ENCODE measurements at regions of chr12 and their contacts with region 1.

Region 1: DNA sequence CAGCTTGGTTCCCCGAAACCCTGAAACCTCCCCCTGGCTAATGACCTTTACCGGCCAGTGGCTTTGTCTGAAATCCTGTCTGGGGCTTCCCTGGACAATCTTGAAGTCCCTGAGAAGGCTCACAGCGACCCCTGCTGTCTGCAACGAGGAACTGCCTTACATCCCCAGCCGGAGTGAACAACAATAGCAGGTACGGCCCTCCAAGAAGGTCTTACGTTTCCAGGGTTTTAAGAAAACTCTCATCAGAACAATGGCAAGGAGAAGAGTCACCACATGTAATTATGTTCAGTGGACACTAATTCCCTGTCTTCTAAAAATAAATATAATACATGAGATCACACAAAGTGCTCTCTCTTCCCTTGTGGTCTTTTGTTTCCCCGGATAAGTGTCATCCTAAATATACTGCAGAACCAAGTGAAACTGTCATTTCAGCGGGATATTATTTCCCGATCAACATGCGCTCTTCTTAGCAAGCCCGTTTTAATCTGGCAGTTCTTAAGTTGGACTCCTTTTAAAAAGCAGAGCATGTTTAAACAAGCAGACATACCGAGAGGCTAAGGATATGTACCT is 53.3 kb downstream of the RBM19 start:
- DNase-seq: peak; percentile 11 to 47 (median 14)
- H3K4me3 ChIP-seq: no peak overlapping the region
- H3K4me3 Mint-ChIP-seq: no peak overlapping the region
- H3K27ac ChIP-seq: no peak overlapping the region
- H3K27ac Mint-ChIP-seq: no peak overlapping the region
- H3K4me1 ChIP-seq: no peaks in the 10 kb centered on the region
- H3K4me1 Mint-ChIP-seq: no peaks in the 10 kb centered on the region
- H3K27me3 ChIP-seq: no peaks in the 10 kb centered on the region
- H3K27me3 Mint-ChIP-seq: no peaks in the 10 kb centered on the region
- CTCF ChIP-seq: peak; percentile 85

Region 2: DNA sequence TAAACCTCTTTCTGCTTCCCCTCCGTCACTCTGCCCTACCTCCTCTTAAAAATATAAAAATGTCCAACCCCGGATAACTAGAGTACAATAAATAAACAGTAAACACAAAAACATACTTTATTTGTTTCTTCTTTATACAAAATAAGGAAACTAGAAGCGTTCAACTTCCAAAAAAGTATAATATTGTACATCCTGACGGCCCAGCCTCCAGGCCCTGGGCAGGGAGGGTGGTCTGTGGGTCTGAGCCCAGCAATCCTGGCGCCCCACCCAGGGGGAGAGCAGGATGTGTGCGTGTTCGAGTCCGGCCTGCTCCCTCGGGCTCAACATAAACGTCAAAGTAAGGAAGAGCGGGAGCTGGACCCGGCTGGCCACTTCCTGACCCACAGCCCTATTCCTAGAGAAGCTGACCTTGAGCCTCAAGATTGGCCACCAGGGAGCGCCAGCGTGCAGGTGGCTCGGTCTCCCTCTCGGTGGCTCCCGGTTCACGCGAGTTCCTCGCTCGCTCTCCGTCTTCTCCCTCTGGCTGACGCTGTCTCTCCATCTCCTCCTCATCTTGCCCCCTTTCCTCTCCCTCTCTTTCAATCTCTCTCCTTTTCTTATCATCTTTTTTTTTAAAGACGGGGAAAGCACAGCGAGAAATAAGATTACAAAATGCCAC is 450.6 kb before region 1 on chr12:
- intact Hi-C with region 1: loop called (anchors 5 kb)
- DNase-seq: peak; percentile 65 to 71 (median 70)
- H3K4me3 ChIP-seq: peak overlapping the region in 1 of 3 experiments; percentile 63
- H3K4me3 Mint-ChIP-seq: peak overlapping the region; percentile 70 to 93
- H3K27ac ChIP-seq: no peak overlapping the region
- H3K27ac Mint-ChIP-seq: peak overlapping the region in 1 of 7 donors; percentile 55
- H3K4me1 ChIP-seq: peaks cover 5 to 14% of the 10 kb centered on the region in 2 donors
- H3K4me1 Mint-ChIP-seq: peaks cover 22% of the 10 kb centered on the region
- H3K27me3 ChIP-seq: peaks cover 50 to 74% of the 10 kb centered on the region in 2 donors
- H3K27me3 Mint-ChIP-seq: peaks cover 66 to 94% (median 84%) of the 10 kb centered on the region in 3 donors
- CTCF ChIP-seq: peak; percentile 78